AG04449 (cell line): ENCODE measurements at regions of chr9 and their contacts with region 1.

Region 1: DNA sequence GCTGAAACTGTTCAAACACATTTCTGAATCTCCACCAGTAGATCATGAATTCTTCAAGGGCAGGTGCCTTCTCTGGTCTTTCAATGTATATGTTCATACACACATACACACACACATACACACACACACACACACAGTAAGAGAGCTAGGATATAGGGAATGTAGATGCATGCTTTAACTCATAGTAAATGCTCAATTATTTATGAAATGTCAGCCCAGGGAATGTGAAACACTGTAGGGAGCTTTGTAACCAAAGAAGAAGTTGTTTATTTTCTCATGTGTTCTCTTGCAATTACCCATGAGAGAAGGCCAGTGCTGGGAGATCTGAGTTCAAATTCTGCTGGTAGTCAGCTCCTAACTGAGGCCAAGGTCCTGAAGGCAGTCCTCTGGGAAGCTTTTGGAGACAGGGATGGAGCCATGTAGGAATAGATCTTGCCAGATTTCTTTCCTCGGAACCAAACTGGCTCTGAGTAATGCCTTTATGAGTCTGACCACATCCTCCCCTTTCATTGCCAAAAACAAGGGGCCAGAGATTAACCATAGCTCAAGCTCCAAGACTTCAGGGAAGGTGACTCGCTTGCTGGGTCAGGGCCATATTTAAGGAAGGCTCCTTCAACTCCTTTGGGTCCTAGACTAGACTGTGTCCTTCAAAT is 487.0 kb upstream of the TNC start:
- DNase-seq: peak; percentile 84
- H3K4me3 ChIP-seq: no peak overlapping the region
- CTCF ChIP-seq: no peak

Region 2: GRCh38 chr9:115575147-115575546 is 29.8 kb before region 1 on chr9:
- CTCF ChIA-PET with region 1: no interaction called
- POLR2A ChIA-PET with region 1: no interaction called
- DNase-seq: no peak
- H3K4me3 ChIP-seq: no peak overlapping the region
- CTCF ChIP-seq: no peak

Region 3: GRCh38 chr9:115615821-115616665 is 11.1 kb after region 1 on chr9:
- CTCF ChIA-PET with region 1: interaction called, 11 read pairs
- POLR2A ChIA-PET with region 1: interaction called, 8 read pairs
- DNase-seq: peak; percentile 71
- H3K4me3 ChIP-seq: no peak overlapping the region
- CTCF ChIP-seq: no peak